Uterus (tissue), 4 donors: ENCODE measurements at regions of chrX and their contacts with region 1.

Region 1: GRCh38 chrX:130079824-130080406 is 30.4 kb downstream of the ELF4 start:
- DNase-seq: peak; percentile 65 to 73
- H3K4me3 ChIP-seq: no peak overlapping the region
- H3K27ac ChIP-seq: peak overlapping the region in 1 of 2 donors; percentile 39
- H3K4me1 ChIP-seq: no peaks in the 10 kb centered on the region
- H3K27me3 ChIP-seq: no peaks in the 10 kb centered on the region
- CTCF ChIP-seq: peak; percentile 70 to 76 (median 74)
- POLR2A ChIP-seq: no peak

Region 2: DNA sequence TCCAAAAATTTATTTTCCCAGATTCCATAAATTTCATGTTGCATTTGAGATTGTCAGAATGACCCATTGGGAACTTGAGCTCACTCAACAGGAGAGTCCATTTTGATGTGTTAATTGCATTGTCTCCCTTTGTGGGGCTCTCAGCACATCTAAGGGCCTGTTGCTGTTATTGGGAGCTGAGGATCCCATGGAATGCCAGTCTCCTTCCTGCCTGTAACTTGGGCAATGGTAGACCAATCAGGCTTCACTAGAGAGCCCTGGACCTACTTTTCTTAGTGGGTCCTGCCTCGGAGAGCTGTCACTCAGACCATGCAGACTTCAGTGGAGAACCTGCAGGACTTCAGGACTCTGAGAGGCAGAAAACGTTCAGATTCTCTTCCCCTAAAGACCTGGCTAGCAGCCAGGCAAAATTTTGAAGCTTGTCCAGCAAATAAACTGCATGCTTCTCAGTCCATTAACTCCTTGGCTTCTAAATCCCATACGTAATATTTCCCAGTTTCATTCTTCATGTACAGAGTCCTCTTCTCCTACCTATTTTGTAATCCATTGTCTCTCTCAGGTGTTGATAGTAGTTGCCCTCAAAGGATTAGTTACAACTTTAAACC is 514.8 kb before region 1 on chrX:
- intact Hi-C with region 1: no loop called
- DNase-seq: no peak
- H3K4me3 ChIP-seq: no peak overlapping the region
- H3K27ac ChIP-seq: no peak overlapping the region
- H3K4me1 ChIP-seq: no peaks in the 10 kb centered on the region
- H3K27me3 ChIP-seq: no peaks in the 10 kb centered on the region
- CTCF ChIP-seq: no peak
- POLR2A ChIP-seq: no peak

Region 3: GRCh38 chrX:130190801-130191200 is 110.9 kb after region 1 on chrX:
- intact Hi-C with region 1: loop called (anchors 5 kb)
- DNase-seq: no peak
- H3K4me3 ChIP-seq: no peak overlapping the region
- H3K27ac ChIP-seq: no peak overlapping the region
- H3K4me1 ChIP-seq: no peaks in the 10 kb centered on the region
- H3K27me3 ChIP-seq: no peaks in the 10 kb centered on the region
- CTCF ChIP-seq: no peak
- POLR2A ChIP-seq: no peak